PC-3 (cell line): ENCODE measurements at regions of chr6 and their contacts with region 1.

Region 1: GRCh38 chr6:36015666-36016065 is 8.8 kb downstream of the SLC26A8 start:
- DNase-seq: no peak
- ATAC-seq: no peak
- H3K4me3 ChIP-seq: no peak overlapping the region
- H3K27ac ChIP-seq: no peak overlapping the region
- H3K4me1 ChIP-seq: no peaks in the 10 kb centered on the region
- H3K27me3 ChIP-seq: no peaks in the 10 kb centered on the region
- CTCF ChIP-seq: no peak

Region 2: DNA sequence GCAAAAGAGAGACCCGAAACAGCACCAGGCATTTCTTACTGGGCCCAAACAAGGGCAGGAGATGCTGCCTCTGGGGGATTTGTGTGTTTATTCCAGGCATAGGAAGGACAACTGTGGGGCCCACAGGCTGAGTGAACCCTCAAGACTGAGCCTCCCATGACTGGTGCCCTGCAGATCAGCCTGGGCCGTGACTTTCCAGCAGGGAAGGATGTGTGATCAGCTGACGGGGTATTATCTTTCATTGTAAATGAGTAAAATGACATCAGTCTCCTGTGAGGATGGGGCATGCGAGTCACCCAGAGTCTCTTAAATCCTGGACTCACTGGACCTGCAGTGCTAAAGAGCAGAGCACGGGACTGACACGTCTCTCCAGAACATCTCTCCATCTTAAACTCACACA is 514.9 kb before region 1 on chr6:
- CTCF ChIA-PET with region 1: no interaction called
- POLR2A ChIA-PET with region 1: no interaction called
- intact Hi-C with region 1: no loop called
- DNase-seq: peak; percentile 58
- ATAC-seq: peak; percentile 3; the same call in 1 of the 2 replicates
- H3K4me3 ChIP-seq: no peak overlapping the region
- H3K27ac ChIP-seq: no peak overlapping the region
- H3K4me1 ChIP-seq: peaks cover 15% of the 10 kb centered on the region
- H3K27me3 ChIP-seq: no peaks in the 10 kb centered on the region
- CTCF ChIP-seq: no peak

Region 3: GRCh38 chr6:35973670-35974222 is 41.9 kb before region 1 on chr6:
- CTCF ChIA-PET with region 1: no interaction called
- POLR2A ChIA-PET with region 1: interaction called, 17 read pairs
- intact Hi-C with region 1: no loop called
- DNase-seq: peak; percentile 80
- ATAC-seq: peak; percentile 84
- H3K4me3 ChIP-seq: no peak overlapping the region
- H3K27ac ChIP-seq: peak overlapping the region; percentile 80
- H3K4me1 ChIP-seq: peaks cover 29% of the 10 kb centered on the region
- H3K27me3 ChIP-seq: no peaks in the 10 kb centered on the region
- CTCF ChIP-seq: no peak

Region 4: DNA sequence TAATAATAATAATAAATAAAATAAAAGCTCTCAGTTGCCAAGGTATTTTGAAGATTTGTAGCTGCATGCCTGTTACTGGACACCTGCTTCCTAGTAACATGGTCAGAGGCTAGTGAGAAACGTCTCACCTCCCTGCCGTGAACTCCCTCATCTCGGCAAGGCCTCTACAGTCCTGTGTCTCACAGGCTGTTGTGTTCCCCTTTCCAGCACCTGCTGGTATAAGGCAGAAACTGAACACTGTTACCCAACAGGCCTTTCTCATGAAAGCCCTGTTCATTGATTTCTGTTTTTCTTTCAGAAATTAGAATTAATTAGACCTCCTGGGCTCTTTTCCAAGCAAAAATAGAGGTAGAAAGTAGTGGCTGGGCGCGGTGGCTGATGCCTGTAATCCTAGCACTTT is 560.9 kb after region 1 on chr6:
- CTCF ChIA-PET with region 1: no interaction called
- POLR2A ChIA-PET with region 1: no interaction called
- intact Hi-C with region 1: no loop called
- DNase-seq: no peak
- ATAC-seq: no peak
- H3K4me3 ChIP-seq: no peak overlapping the region
- H3K27ac ChIP-seq: peak overlapping the region; percentile 37; the same call in 1 of the 2 replicates
- H3K4me1 ChIP-seq: peaks cover 29% of the 10 kb centered on the region
- H3K27me3 ChIP-seq: no peaks in the 10 kb centered on the region
- CTCF ChIP-seq: no peak